Adrenal gland (tissue), 19 donors: ENCODE measurements at regions of chr9 and their contacts with region 1.

Region 1: GRCh38 chr9:91611630-91612029 is 188.0 kb upstream of the NFIL3 start:
- DNase-seq: no peak
- H3K4me3 ChIP-seq: no peak overlapping the region
- H3K27ac ChIP-seq: no peak overlapping the region
- H3K4me1 ChIP-seq: no peaks in the 10 kb centered on the region
- H3K27me3 ChIP-seq: no peaks in the 10 kb centered on the region
- CTCF ChIP-seq: no peak
- POLR2A ChIP-seq: no peak

Region 2: GRCh38 chr9:91522481-91522880 is 89.1 kb before region 1 on chr9:
- intact Hi-C with region 1: no loop called
- DNase-seq: no peak
- H3K4me3 ChIP-seq: no peak overlapping the region
- H3K27ac ChIP-seq: no peak overlapping the region
- H3K4me1 ChIP-seq: no peaks in the 10 kb centered on the region
- H3K27me3 ChIP-seq: no peaks in the 10 kb centered on the region
- CTCF ChIP-seq: no peak
- POLR2A ChIP-seq: no peak

Region 3: GRCh38 chr9:91647371-91647770 is 35.7 kb after region 1 on chr9:
- intact Hi-C with region 1: no loop called
- DNase-seq: no peak
- H3K4me3 ChIP-seq: no peak overlapping the region
- H3K27ac ChIP-seq: no peak overlapping the region
- H3K4me1 ChIP-seq: no peaks in the 10 kb centered on the region
- H3K27me3 ChIP-seq: no peaks in the 10 kb centered on the region
- CTCF ChIP-seq: no peak
- POLR2A ChIP-seq: no peak

Region 4: DNA sequence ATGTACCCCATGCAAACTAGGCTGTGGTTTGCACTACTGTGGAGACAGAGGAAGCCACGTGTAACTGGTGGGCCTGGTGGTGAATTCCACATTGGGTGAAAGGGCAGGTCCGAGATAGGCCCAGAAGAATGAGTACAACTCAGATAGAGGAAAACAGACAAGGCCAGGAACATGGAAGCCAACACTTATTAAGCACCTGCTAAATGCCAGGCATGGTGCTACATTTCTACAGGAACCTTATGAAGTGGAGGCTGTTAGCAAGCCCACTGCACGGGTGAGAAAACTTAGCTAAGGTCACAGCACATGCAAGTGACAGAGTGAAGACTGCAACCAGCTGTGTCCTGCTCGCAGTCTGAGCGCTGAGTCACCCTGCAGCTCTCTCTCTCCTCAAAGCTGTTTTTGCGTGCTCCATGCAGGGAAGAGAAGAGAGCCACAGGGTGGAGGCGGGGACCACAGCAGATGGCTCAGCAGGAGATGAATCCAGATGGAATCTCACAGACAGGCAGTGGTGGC is 569.1 kb after region 1 on chr9:
- intact Hi-C with region 1: loop called in 1 of 2 experiments (anchors 5 kb)
- DNase-seq: peak; percentile 54 to 85 (median 71)
- H3K4me3 ChIP-seq: no peak overlapping the region
- H3K27ac ChIP-seq: peak overlapping the region in 1 of 5 donors; percentile 74
- H3K4me1 ChIP-seq: peaks cover 0 to 8% of the 10 kb centered on the region in 2 donors
- H3K27me3 ChIP-seq: no peaks in the 10 kb centered on the region
- CTCF ChIP-seq: peak in 1 of 6 experiments; percentile 2
- POLR2A ChIP-seq: no peak